ENCODE measurements at regions of chr17 and their contacts with region 1.

Region 1: DNA sequence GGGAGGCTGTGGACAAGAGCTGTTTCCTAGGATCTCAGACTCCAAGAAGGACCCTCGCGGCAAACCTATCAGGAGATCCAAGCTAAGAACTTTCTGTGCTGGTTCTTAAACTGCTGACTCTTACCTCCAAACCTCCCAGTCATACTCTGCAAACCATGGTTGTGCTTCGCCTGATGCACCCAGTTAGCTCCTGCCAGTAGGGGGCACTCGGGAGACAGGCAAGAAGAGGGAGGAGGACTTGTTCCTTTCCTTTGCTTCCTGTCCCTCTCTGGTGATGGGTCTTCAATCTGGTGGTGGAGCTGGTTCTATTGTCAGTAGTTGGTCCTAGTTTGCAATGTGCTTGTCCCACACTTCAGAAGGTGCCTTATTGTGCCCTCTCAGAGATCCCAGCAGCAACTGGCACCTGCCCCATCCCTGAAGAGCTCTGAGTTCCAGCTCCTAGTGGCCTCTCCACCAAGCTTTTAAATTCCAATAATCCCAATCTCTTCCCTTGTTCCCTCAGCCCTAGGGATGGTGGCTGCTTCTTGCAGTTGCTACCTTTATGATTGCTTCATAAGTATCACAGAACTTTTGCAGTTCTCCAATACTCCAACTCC is 113.5 kb upstream of the RPL38 start:
- DNase-seq: peak in 2 of 4 donors; percentile 11 to 69
- ATAC-seq: peak; percentile 82
- H3K4me3 ChIP-seq: no peak overlapping the region
- H3K27ac ChIP-seq: no peak overlapping the region
- H3K4me1 ChIP-seq: no peaks in the 10 kb centered on the region
- H3K27me3 ChIP-seq: peaks cover 0 to 13% of the 10 kb centered on the region in 2 donors
- CTCF ChIP-seq: peak; percentile 51 to 59

Region 2: GRCh38 chr17:74152591-74153455 is 62.9 kb after region 1 on chr17:
- intact Hi-C with region 1: loop called in 1 of 2 experiments (anchors 10 kb)
- DNase-seq: peak in 1 of 4 donors; percentile 49
- ATAC-seq: peak; percentile 15
- H3K4me3 ChIP-seq: no peak overlapping the region
- H3K27ac ChIP-seq: no peak overlapping the region
- H3K4me1 ChIP-seq: no peaks in the 10 kb centered on the region
- H3K27me3 ChIP-seq: peaks cover 0 to 36% of the 10 kb centered on the region in 2 donors
- CTCF ChIP-seq: no peak

Measured in left lung (tissue), 14 donors.